Activated B cell treated with CpG ODN at 0.5 μM for 24 hours (primary cell): ENCODE measurements at regions of chr17 and their contacts with region 1.

Region 1: GRCh38 chr17:38982858-38983746 is 15.9 kb upstream of the FBXO47 start:
- DNase-seq: no peak
- ATAC-seq: peak; percentile 54
- H3K4me3 Mint-ChIP-seq: no peak overlapping the region
- H3K27ac Mint-ChIP-seq: no peak overlapping the region
- H3K4me1 Mint-ChIP-seq: no peaks in the 10 kb centered on the region
- H3K27me3 Mint-ChIP-seq: peaks cover 10% of the 10 kb centered on the region
- CTCF ChIP-seq: peak; percentile 47

Region 2: GRCh38 chr17:38879878-38880682 is 103.0 kb before region 1 on chr17:
- CTCF ChIA-PET with region 1: no interaction called
- POLR2A ChIA-PET with region 1: no interaction called
- intact Hi-C with region 1: no loop called
- DNase-seq: no peak
- ATAC-seq: no peak
- H3K4me3 Mint-ChIP-seq: no peak overlapping the region
- H3K27ac Mint-ChIP-seq: peak overlapping the region; percentile 30
- H3K4me1 Mint-ChIP-seq: peaks cover 86% of the 10 kb centered on the region
- H3K27me3 Mint-ChIP-seq: no peaks in the 10 kb centered on the region
- CTCF ChIP-seq: no peak

Region 3: DNA sequence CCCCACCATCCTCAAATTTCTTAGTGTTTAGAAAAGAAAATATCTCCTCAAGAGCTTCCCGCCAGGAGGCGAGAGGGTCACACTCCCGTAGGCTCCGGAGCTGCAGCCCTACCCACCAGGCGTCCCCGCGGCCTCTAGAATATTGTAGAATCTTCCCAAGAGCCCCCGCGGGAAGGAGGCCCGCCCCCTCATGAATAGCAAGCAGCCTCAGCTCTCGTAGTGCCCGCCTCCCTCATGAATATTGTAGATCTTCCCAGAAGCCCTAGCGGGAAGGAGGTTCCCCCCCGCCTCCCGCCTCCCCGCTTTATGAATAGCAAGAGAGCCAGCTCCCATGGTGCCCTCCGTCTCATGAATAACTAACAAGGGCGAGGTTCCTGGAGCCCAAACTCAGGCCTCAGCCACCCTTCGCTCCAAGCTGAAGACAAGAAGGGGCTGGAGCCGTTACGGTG is 15.8 kb before region 1 on chr17 and contains the start of gene FBXO47:
- CTCF ChIA-PET with region 1: interaction called, 10 read pairs
- POLR2A ChIA-PET with region 1: interaction called, 12 read pairs
- intact Hi-C with region 1: no loop called
- DNase-seq: peak; percentile 64
- ATAC-seq: peak; percentile 99
- H3K4me3 Mint-ChIP-seq: peak within 1 kb of the TSS; percentile 78
- H3K27ac Mint-ChIP-seq: peak within 1 kb of the TSS; percentile 85
- H3K4me1 Mint-ChIP-seq: peaks cover 10% of the 10 kb centered on the region
- H3K27me3 Mint-ChIP-seq: no peaks in the 10 kb centered on the region
- CTCF ChIP-seq: no peak
- total RNA-seq, gene FBXO47: not detected in 2 replicates

Region 4: DNA sequence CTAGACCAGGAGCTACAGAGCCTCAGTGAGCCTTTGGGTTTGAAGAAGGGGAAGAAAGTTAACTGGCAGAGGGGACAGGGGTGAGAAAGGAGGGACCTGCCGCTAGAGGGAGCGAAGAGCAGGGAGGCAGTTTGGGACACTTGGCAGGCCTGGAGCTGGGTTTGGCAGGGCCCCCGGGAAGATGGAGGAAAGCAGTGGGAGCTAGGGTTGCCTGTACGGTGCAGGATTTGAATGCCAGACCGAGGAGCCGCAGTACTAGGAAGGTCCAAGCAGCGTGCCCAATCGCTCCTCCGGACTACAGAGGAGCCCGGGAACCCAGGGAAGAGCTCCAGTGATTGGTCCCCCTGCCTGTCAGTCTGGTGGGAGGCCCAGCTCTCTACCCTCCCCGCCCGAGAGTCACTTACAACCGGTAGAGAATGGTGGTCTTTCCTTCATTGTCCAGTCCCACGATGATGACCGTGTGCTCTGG is 181.6 kb after region 1 on chr17:
- CTCF ChIA-PET with region 1: interaction called, 17 read pairs
- POLR2A ChIA-PET with region 1: interaction called, 5 read pairs
- intact Hi-C with region 1: no loop called
- DNase-seq: peak; percentile 64
- ATAC-seq: peak; percentile 95
- H3K4me3 Mint-ChIP-seq: peak overlapping the region; percentile 89
- H3K27ac Mint-ChIP-seq: no peak overlapping the region
- H3K4me1 Mint-ChIP-seq: peaks cover 23% of the 10 kb centered on the region
- H3K27me3 Mint-ChIP-seq: peaks cover 26% of the 10 kb centered on the region
- CTCF ChIP-seq: no peak

Region 5: GRCh38 chr17:39235555-39236449 is 252.7 kb after region 1 on chr17:
- CTCF ChIA-PET with region 1: interaction called, 30 read pairs
- POLR2A ChIA-PET with region 1: no interaction called
- intact Hi-C with region 1: no loop called
- DNase-seq: no peak
- ATAC-seq: peak; percentile 27
- H3K4me3 Mint-ChIP-seq: no peak overlapping the region
- H3K27ac Mint-ChIP-seq: no peak overlapping the region
- H3K4me1 Mint-ChIP-seq: peaks cover 27% of the 10 kb centered on the region
- H3K27me3 Mint-ChIP-seq: peaks cover 15% of the 10 kb centered on the region
- CTCF ChIP-seq: no peak